ENCODE measurements at regions of chr3 and their contacts with region 1.

Region 1: GRCh38 chr3:28139967-28140634 is 101.3 kb upstream of the CMC1 start:
- DNase-seq: no peak
- ATAC-seq: peak; percentile 6
- H3K4me3 ChIP-seq: no peak overlapping the region
- H3K27ac ChIP-seq: no peak overlapping the region
- H3K4me1 ChIP-seq: no peaks in the 10 kb centered on the region
- H3K27me3 ChIP-seq: no peaks in the 10 kb centered on the region
- CTCF ChIP-seq: no peak
- EP300 ChIP-seq: no peak
- POLR2A ChIP-seq: no peak
- RAD21 ChIP-seq: no peak

Region 2: DNA sequence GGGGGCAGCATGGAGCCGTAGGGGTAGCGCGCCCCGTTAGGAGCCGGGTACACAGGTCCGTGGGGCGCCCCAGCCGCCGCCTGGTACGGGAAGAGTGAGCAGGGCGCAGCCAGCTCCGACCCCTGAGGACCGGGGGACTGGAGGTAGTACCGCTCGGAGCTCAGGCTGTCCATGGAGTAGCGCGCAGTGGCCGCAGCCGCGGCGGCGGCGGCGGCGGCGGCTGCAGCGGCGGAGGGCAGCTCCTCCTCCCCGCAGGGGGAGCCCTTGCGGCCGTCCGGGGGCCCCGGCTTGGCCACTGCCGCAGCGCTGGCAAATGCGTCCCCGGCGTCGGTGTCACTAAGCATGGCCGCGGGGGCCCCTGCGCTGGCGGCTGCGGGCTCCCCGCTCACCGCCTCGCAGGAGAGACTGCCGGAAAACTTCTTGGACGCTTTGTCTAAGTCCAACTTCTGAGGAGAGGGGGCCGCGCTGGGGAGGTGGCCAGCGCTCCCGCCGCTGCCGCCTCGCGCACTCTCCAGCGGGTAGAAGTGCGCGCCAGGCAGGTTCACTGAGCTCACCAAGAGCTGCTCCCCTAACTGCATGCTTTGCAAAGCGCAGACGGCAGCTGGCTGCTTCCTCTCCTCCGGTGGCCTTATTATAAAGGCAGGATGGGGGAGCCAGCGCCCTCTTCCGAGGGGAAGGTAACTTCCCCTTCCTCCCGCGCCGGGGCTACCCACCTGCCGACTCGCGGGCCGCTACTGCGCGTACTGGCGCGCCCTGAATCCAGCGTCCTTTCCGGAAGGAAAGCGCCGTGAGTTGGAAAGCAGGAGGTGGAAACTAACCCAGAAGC is 418.2 kb before region 1 on chr3 and contains the start of gene EOMES:
- CTCF ChIA-PET with region 1: interaction called, 3 read pairs
- POLR2A ChIA-PET with region 1: interaction called, 6 read pairs
- RAD21 ChIA-PET with region 1: interaction called, 104 read pairs
- SMC1A ChIA-PET with region 1: interaction called, 23 read pairs
- in situ Hi-C with region 1: loop called (anchors 10 kb)
- intact Hi-C with region 1: loop called (anchors 5 kb)
- DNase-seq: no peak
- ATAC-seq: peak; percentile 65
- H3K4me3 ChIP-seq: peak within 1 kb of the TSS; percentile 44; the same call in 1 of the 2 replicates
- H3K27ac ChIP-seq: no peak within 1 kb of the TSS
- H3K4me1 ChIP-seq: no peaks in the 10 kb centered on the region
- H3K27me3 ChIP-seq: peaks cover 2 to 14% of the 10 kb centered on the region in 2 experiments
- CTCF ChIP-seq: peak; percentile 10 to 61 (median 52); a peak in 5 of 6 replicates
- EP300 ChIP-seq: no peak
- POLR2A ChIP-seq: no peak
- RAD21 ChIP-seq: no peak
- polyA plus RNA-seq, gene EOMES: 1.5 to 2.8 TPM

Region 3: GRCh38 chr3:28042095-28042635 is 97.9 kb before region 1 on chr3:
- CTCF ChIA-PET with region 1: interaction called, 3 read pairs
- POLR2A ChIA-PET with region 1: no interaction called
- RAD21 ChIA-PET with region 1: interaction called, 16 read pairs
- SMC1A ChIA-PET with region 1: interaction called, 8 read pairs
- in situ Hi-C with region 1: no loop called
- intact Hi-C with region 1: no loop called
- DNase-seq: no peak
- ATAC-seq: peak; percentile 78
- H3K4me3 ChIP-seq: no peak overlapping the region
- H3K27ac ChIP-seq: no peak overlapping the region
- H3K4me1 ChIP-seq: no peaks in the 10 kb centered on the region
- H3K27me3 ChIP-seq: no peaks in the 10 kb centered on the region
- CTCF ChIP-seq: no peak
- EP300 ChIP-seq: peak in 1 of 2 experiments; percentile 57; a peak in 1 of 4 replicates
- POLR2A ChIP-seq: no peak
- RAD21 ChIP-seq: no peak

Region 4: DNA sequence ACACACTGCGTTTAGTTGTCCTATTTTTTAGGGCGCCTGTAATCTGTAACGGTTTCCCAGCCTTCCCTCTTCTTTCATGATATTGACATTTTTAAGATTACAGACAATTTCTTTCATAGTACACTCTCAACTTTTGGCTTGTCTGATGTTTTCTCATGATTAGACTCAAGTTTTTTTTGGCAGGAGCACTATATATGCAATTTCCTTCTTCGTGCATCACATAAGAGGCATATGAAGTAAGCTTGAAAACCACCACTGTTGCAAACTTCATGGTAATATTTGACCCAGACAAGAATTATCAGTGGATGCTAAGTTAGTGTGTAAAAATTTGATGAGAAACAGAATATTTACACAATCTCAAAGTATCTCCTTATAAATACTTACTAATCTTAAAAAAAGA is 17.9 kb before region 1 on chr3:
- CTCF ChIA-PET with region 1: interaction called, 4 read pairs
- POLR2A ChIA-PET with region 1: interaction called, 54 read pairs
- RAD21 ChIA-PET with region 1: interaction called, 344 read pairs
- SMC1A ChIA-PET with region 1: interaction called, 602 read pairs
- in situ Hi-C with region 1: no loop called
- intact Hi-C with region 1: no loop called
- DNase-seq: no peak
- ATAC-seq: no peak
- H3K4me3 ChIP-seq: no peak overlapping the region
- H3K27ac ChIP-seq: no peak overlapping the region
- H3K4me1 ChIP-seq: no peaks in the 10 kb centered on the region
- H3K27me3 ChIP-seq: no peaks in the 10 kb centered on the region
- CTCF ChIP-seq: no peak
- EP300 ChIP-seq: no peak
- POLR2A ChIP-seq: no peak
- RAD21 ChIP-seq: no peak

Region 5: DNA sequence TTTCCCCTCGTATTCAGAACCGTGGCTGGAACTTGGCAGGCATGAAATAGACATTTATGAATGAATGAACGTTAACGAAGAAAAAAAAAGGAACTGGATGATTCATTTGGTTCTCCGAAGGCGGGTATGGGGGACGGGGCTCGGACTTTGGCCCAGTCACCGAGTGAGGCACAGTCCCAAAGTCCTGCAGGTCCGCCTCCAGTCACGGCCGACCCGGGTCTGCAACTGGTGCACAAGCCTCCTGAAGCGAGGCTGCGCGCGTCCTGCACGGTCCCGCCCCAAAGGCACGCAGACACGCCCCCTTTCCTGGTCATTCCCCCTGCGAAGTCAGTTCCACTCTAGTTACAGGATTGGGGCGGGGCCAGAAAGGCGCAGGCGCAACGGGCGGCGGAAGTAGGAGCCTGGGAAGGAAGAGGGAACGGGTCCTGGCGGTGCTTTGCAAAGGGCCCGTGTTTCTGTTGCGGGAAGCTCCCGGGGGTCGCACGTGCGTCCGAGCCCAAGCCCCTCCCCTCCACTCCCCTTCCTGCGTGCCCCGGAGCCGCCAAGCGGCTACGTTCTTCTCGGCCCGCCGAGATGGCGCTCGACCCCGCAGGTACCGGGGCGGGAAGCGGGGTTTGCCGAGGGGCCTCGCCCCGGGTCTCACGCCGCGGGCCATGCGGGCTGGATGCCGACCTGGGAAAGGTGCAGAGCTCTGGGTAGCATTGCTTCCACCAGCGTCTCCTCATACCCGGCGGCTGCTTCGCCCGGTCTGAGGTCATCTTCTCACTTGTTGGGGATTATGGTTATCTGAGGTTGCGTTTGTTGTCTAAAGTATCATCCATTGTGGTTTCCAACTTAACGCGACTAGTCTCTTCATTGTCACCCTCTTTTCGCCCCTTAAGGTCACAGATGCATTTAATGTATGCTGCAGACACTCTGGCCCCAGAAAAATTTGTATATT is 101.4 kb after region 1 on chr3 and contains the start of gene CMC1:
- CTCF ChIA-PET with region 1: interaction called, 4 read pairs
- POLR2A ChIA-PET with region 1: interaction called, 4 read pairs
- RAD21 ChIA-PET with region 1: interaction called, 10 read pairs
- SMC1A ChIA-PET with region 1: interaction called, 8 read pairs
- in situ Hi-C with region 1: no loop called
- intact Hi-C with region 1: no loop called
- DNase-seq: peak; percentile 85
- ATAC-seq: peak; percentile 95
- H3K4me3 ChIP-seq: peak within 1 kb of the TSS; percentile 81
- H3K27ac ChIP-seq: peak within 1 kb of the TSS; percentile 79
- H3K4me1 ChIP-seq: no peaks in the 10 kb centered on the region
- H3K27me3 ChIP-seq: no peaks in the 10 kb centered on the region
- CTCF ChIP-seq: no peak
- EP300 ChIP-seq: peak; percentile 24 to 28; a peak in 2 of 4 replicates
- POLR2A ChIP-seq: peak; percentile 84
- RAD21 ChIP-seq: no peak
- polyA plus RNA-seq, gene CMC1: 26.9 to 41.2 TPM

Region 6: DNA sequence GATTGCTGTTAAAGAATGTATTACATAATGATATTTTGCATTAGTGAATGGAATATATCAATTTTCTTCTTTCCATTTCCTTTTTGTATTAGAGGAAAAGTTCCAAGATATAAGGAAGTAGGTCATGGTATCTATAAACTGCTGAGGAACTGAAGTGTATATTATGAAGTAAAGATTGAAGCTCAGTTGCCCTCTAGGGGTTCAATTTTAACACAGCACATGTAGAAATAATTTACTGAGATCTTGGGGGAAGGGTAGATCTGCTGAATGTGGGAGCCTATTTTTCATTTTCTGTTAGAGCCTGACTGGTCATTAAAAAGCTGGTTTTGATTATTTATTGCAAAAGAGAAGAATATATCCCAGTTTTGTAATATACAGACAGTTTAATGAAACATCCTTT is 146.5 kb after region 1 on chr3:
- CTCF ChIA-PET with region 1: interaction called, 3 read pairs
- POLR2A ChIA-PET with region 1: no interaction called
- RAD21 ChIA-PET with region 1: interaction called, 5 read pairs
- SMC1A ChIA-PET with region 1: interaction called, 4 read pairs
- in situ Hi-C with region 1: no loop called
- intact Hi-C with region 1: loop called (anchors 5 kb)
- DNase-seq: peak; percentile 8
- ATAC-seq: peak; percentile 96
- H3K4me3 ChIP-seq: no peak overlapping the region
- H3K27ac ChIP-seq: no peak overlapping the region
- H3K4me1 ChIP-seq: no peaks in the 10 kb centered on the region
- H3K27me3 ChIP-seq: no peaks in the 10 kb centered on the region
- CTCF ChIP-seq: peak; percentile 48 to 63 (median 50); a peak in 5 of 6 replicates
- EP300 ChIP-seq: no peak
- POLR2A ChIP-seq: no peak
- RAD21 ChIP-seq: peak; percentile 73